Activated CD4-positive, alpha-beta T cell treated with anti-CD3 and anti-CD28 coated beads for 36 hours (primary cell): ENCODE measurements at regions of chr3 and their contacts with region 1.

Region 1: GRCh38 chr3:172562871-172563863 is 39.9 kb upstream of the TNFSF10 start:
- DNase-seq: peak; percentile 64
- ATAC-seq: peak; percentile 67
- H3K4me3 Mint-ChIP-seq: peak overlapping the region; percentile 42
- H3K27ac Mint-ChIP-seq: peak overlapping the region; percentile 75
- H3K4me1 Mint-ChIP-seq: peaks cover 31% of the 10 kb centered on the region
- H3K27me3 Mint-ChIP-seq: no peaks in the 10 kb centered on the region

Region 2: DNA sequence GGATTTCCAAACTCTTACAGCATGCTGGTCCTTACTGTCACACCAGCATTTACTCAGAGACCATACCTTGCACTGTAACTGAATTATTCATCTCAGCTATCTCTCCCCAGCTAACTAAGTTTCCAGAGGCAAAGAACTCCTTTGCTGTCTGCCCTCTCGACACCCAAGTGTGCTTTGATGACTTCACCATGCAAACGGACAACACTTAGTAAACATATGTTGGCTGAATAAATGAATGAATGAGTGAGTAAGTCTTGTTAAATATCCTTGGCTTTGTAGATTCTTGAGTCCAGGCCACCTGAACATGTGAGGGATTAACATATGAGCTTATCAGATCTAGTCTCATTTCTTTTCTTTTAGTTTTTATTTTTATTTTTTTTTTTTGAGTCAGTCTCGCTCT is 891.0 kb before region 1 on chr3:
- CTCF ChIA-PET with region 1: no interaction called
- POLR2A ChIA-PET with region 1: no interaction called
- intact Hi-C with region 1: no loop called
- DNase-seq: no peak
- ATAC-seq: no peak
- H3K4me3 Mint-ChIP-seq: no peak overlapping the region
- H3K27ac Mint-ChIP-seq: no peak overlapping the region
- H3K4me1 Mint-ChIP-seq: no peaks in the 10 kb centered on the region
- H3K27me3 Mint-ChIP-seq: no peaks in the 10 kb centered on the region

Region 3: GRCh38 chr3:172511783-172512762 is 51.1 kb before region 1 on chr3:
- CTCF ChIA-PET with region 1: interaction called, 5 read pairs
- POLR2A ChIA-PET with region 1: no interaction called
- intact Hi-C with region 1: loop called in 1 of 2 experiments (anchors 2 kb)
- DNase-seq: peak; percentile 85
- ATAC-seq: peak; percentile 73
- H3K4me3 Mint-ChIP-seq: peak overlapping the region; percentile 67
- H3K27ac Mint-ChIP-seq: peak overlapping the region; percentile 92
- H3K4me1 Mint-ChIP-seq: peaks cover 63% of the 10 kb centered on the region
- H3K27me3 Mint-ChIP-seq: no peaks in the 10 kb centered on the region

Region 4: DNA sequence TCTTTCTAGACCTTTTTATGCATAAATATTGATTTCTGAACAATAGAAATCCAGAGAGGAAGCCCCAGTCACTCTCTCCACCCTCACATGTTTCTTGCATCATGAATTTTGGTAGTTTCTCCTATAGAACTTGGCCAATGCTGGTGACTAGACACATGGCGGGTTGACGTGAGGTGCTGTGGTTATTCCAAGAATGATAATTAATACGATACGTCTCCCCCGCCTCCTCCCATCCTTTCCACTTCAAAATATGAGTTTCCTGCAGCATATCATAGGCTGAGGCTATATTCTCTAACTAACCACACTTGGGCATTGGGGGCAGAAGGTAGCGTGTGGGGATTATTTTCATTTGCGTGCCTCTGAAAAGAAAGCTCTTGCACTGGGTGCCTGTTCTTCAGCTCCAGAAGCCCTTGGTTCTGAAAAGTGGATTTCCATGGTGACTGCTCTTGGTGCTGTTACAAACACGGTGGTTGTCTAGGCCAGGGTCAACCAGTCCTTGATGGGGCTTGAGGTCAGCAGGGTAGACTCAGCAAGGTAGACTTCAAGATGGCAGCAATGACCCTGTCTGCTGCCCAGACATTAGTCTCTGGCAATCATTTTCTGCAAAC is 45.2 kb before region 1 on chr3:
- CTCF ChIA-PET with region 1: interaction called, 5 read pairs
- POLR2A ChIA-PET with region 1: interaction called, 6 read pairs
- intact Hi-C with region 1: loop called (anchors 1 kb)
- DNase-seq: peak; percentile 74
- ATAC-seq: peak; percentile 39
- H3K4me3 Mint-ChIP-seq: peak overlapping the region; percentile 61
- H3K27ac Mint-ChIP-seq: peak overlapping the region; percentile 89
- H3K4me1 Mint-ChIP-seq: peaks cover 81% of the 10 kb centered on the region
- H3K27me3 Mint-ChIP-seq: no peaks in the 10 kb centered on the region

Region 5: DNA sequence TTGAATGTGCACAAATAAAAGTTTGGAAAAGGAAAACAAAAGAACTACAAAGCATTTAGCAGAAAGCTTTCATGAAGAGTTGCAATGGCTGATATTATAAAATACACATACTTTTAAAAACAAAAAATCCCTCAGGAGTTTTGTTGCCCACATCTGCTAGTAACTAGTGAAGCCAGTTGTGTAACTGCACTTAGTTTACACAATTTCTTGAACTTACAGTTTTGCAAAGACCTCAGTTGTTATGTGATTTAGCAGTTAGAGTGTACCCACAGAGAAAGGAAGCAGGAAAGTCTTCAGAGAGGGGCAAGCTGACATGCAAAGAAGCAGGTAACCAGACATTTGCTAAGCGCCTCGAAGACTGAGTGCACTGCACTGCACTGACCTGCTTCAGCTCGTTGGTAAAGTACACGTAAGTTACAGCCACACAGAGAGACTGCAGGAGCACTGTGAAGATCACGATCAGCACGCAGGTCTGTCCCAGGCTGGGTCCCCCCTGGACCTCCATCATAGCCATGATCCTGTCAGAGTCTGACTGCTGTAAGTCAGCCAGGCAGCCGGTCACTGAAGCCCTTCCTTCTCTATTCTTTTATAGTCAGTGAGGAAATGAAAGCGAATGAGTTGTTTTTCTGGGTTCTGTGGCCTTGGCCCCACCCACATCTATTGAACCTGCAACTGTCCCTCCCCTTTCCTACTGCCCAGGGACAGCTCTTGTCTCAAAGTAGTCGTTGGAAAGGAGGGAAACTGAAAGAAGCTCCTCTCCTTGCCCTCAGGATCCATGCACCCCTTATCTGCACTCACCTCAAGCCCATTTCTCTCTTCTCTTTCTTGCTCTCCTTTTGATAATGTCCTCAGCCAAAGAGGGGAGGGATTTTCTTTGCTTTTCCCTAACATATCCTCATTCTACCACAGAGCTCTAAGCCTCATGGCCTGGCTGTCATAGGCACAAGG is 40.0 kb before region 1 on chr3 and contains the start of gene TNFSF10:
- CTCF ChIA-PET with region 1: interaction called, 5 read pairs
- POLR2A ChIA-PET with region 1: interaction called, 6 read pairs
- intact Hi-C with region 1: loop called (anchors 1 kb)
- DNase-seq: peak; percentile 81
- ATAC-seq: peak; percentile 80
- H3K4me3 Mint-ChIP-seq: peak within 1 kb of the TSS; percentile 91
- H3K27ac Mint-ChIP-seq: peak within 1 kb of the TSS; percentile 95
- H3K4me1 Mint-ChIP-seq: peaks cover 50% of the 10 kb centered on the region
- H3K27me3 Mint-ChIP-seq: no peaks in the 10 kb centered on the region
- total RNA-seq, gene TNFSF10: 33.1 to 34.8 TPM

Region 6: GRCh38 chr3:172530566-172530965 is 32.6 kb before region 1 on chr3:
- CTCF ChIA-PET with region 1: interaction called, 16 read pairs
- POLR2A ChIA-PET with region 1: interaction called, 11 read pairs
- intact Hi-C with region 1: loop called (anchors 1 to 2 kb)
- DNase-seq: peak; percentile 24
- ATAC-seq: peak; percentile 78
- H3K4me3 Mint-ChIP-seq: peak overlapping the region; percentile 15
- H3K27ac Mint-ChIP-seq: peak overlapping the region; percentile 48
- H3K4me1 Mint-ChIP-seq: peaks cover 22% of the 10 kb centered on the region
- H3K27me3 Mint-ChIP-seq: no peaks in the 10 kb centered on the region

Region 7: DNA sequence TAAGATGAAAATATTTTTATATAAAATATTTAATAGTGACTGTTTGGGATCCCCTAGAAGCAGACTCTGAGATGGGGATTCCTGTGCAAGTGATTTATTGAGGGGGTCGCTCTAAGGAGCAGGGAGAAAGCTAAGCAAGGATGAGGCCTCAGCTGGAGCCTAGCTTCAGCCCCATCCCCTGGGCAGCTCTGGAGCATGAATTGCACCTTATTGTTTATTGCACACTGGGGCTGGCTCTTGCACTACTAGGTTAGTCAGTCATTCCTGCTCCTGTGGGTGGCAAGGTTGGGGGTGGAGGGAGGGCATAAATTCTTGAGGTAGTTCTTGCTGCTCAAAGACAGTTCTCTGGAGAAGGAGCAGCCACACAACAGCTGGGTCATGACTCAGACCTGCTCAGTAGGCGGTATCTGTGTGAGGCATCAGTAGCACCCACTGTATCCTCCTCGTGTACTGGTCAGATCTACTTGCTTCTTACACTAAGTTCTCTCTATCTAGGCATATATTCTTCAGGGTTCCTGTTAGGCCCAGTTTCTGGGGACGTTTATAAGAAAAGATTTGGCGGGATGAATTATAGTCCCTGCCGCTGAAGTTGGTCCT is 12.7 kb before region 1 on chr3:
- CTCF ChIA-PET with region 1: interaction called, 13 read pairs
- POLR2A ChIA-PET with region 1: interaction called, 10 read pairs
- intact Hi-C with region 1: loop called (anchors 1 kb)
- DNase-seq: peak; percentile 92
- ATAC-seq: peak; percentile 100
- H3K4me3 Mint-ChIP-seq: no peak overlapping the region
- H3K27ac Mint-ChIP-seq: peak overlapping the region; percentile 82
- H3K4me1 Mint-ChIP-seq: peaks cover 32% of the 10 kb centered on the region
- H3K27me3 Mint-ChIP-seq: no peaks in the 10 kb centered on the region

Region 8: GRCh38 chr3:172580680-172581401 is 17.7 kb after region 1 on chr3:
- CTCF ChIA-PET with region 1: interaction called, 13 read pairs
- POLR2A ChIA-PET with region 1: interaction called, 4 read pairs
- intact Hi-C with region 1: loop called (anchors 1 kb)
- DNase-seq: no peak
- ATAC-seq: peak; percentile 62
- H3K4me3 Mint-ChIP-seq: peak overlapping the region; percentile 20
- H3K27ac Mint-ChIP-seq: peak overlapping the region; percentile 85
- H3K4me1 Mint-ChIP-seq: peaks cover 82% of the 10 kb centered on the region
- H3K27me3 Mint-ChIP-seq: no peaks in the 10 kb centered on the region